PC-3 (cell line): ENCODE measurements at regions of chr15 and their contacts with region 1.

Region 1: GRCh38 chr15:52651868-52652267 is 27.3 kb downstream of the ATOSA start:
- DNase-seq: peak; percentile 71
- ATAC-seq: peak; percentile 84
- H3K4me3 ChIP-seq: peak overlapping the region; percentile 62
- H3K27ac ChIP-seq: peak overlapping the region; percentile 95
- H3K4me1 ChIP-seq: peaks cover 54% of the 10 kb centered on the region
- H3K27me3 ChIP-seq: no peaks in the 10 kb centered on the region
- CTCF ChIP-seq: no peak

Region 2: GRCh38 chr15:52154896-52155865 is 496.7 kb before region 1 on chr15:
- CTCF ChIA-PET with region 1: no interaction called
- POLR2A ChIA-PET with region 1: no interaction called
- intact Hi-C with region 1: no loop called
- DNase-seq: no peak
- ATAC-seq: no peak
- H3K4me3 ChIP-seq: no peak overlapping the region
- H3K27ac ChIP-seq: no peak overlapping the region
- H3K4me1 ChIP-seq: no peaks in the 10 kb centered on the region
- H3K27me3 ChIP-seq: no peaks in the 10 kb centered on the region
- CTCF ChIP-seq: no peak

Region 3: GRCh38 chr15:52679232-52680040 is 27.6 kb after region 1 on chr15 and contains the start of gene ATOSA:
- CTCF ChIA-PET with region 1: no interaction called
- POLR2A ChIA-PET with region 1: no interaction called
- intact Hi-C with region 1: loop called (anchors 2 kb)
- DNase-seq: peak; percentile 73
- ATAC-seq: peak; percentile 78
- H3K4me3 ChIP-seq: peak within 1 kb of the TSS; percentile 80
- H3K27ac ChIP-seq: peak within 1 kb of the TSS; percentile 73
- H3K4me1 ChIP-seq: peaks cover 19% of the 10 kb centered on the region; the same call in 1 of the 2 replicates
- H3K27me3 ChIP-seq: no peaks in the 10 kb centered on the region
- CTCF ChIP-seq: no peak
- total RNA-seq, gene ATOSA: 6.5 and 8.7 TPM in 2 replicates